ENCODE measurements at regions of chr20 and their contacts with region 1.

Region 1: GRCh38 chr20:956330-956951 is 40.3 kb upstream of the ANGPT4 start:
- DNase-seq: peak; percentile 53 to 93
- H3K4me3 ChIP-seq: no peak overlapping the region
- H3K27ac ChIP-seq: no peak overlapping the region
- H3K4me1 ChIP-seq: peaks cover 0 to 3% (median under 1%) of the 10 kb centered on the region in 4 experiments; a peak in 3 of 7 replicates
- H3K27me3 ChIP-seq: peaks cover 0 to 3% (median 0%) of the 10 kb centered on the region in 4 experiments; a peak in 1 of 7 replicates
- CTCF ChIP-seq: peak; percentile 95 to 99 (median 98)
- EP300 ChIP-seq: no peak
- POLR2A ChIP-seq: no peak
- RAD21 ChIP-seq: peak; percentile 100

Region 2: DNA sequence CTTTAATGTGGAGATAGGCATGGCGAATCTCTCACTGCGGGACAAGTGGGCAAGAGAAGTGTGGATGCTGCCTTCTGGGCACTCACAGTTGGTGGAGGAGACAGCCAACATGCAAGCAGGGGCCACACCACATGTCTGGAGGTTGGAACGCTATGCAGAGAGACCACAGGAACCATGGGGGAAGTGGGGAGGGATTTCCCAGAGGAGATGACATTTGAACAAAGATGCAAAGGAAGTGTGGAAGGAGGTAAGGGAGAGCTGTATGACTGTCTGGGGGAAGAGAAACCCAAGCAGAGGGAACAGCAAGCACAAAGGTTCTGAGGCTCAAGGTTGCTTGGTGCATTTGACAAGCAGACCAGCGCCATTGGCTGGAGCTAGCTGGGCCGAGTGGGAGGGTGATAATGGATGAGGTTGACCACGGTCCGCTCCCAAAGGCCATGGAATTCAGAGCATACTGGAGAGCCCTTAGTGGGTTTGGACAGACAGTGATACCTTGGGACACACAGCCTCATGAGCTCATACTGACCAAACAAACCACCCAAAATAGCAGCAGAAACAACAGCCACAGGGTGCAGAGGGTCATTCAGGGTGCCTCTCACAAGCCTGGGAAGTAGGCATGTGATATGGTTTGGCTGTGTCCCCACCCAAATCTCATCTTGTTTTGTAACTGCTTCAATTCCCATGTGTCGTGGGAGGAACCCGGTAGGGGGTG is 130.6 kb before region 1 on chr20:
- CTCF ChIA-PET with region 1: interaction called, 153 read pairs
- POLR2A ChIA-PET with region 1: no interaction called
- DNase-seq: no peak
- H3K4me3 ChIP-seq: no peak overlapping the region
- H3K27ac ChIP-seq: no peak overlapping the region
- H3K4me1 ChIP-seq: peaks cover 0 to 6% (median 0%) of the 10 kb centered on the region in 4 experiments; a peak in 1 of 7 replicates
- H3K27me3 ChIP-seq: no peaks in the 10 kb centered on the region
- CTCF ChIP-seq: no peak
- EP300 ChIP-seq: no peak
- POLR2A ChIP-seq: no peak
- RAD21 ChIP-seq: no peak

Region 3: GRCh38 chr20:884983-885952 is 71.2 kb before region 1 on chr20:
- CTCF ChIA-PET with region 1: interaction called, 191 read pairs
- POLR2A ChIA-PET with region 1: interaction called, 3 read pairs
- DNase-seq: peak; percentile 82 to 91
- H3K4me3 ChIP-seq: peak overlapping the region in 1 of 4 experiments; percentile 32; a peak in 1 of 8 replicates
- H3K27ac ChIP-seq: no peak overlapping the region
- H3K4me1 ChIP-seq: peaks cover 0 to 6% (median 0%) of the 10 kb centered on the region in 4 experiments; a peak in 3 of 7 replicates
- H3K27me3 ChIP-seq: peaks cover 0 to 5% (median 3%) of the 10 kb centered on the region in 4 experiments; a peak in 6 of 7 replicates
- CTCF ChIP-seq: peak; percentile 74 to 98 (median 78)
- EP300 ChIP-seq: no peak
- POLR2A ChIP-seq: no peak
- RAD21 ChIP-seq: peak; percentile 90 to 93

Region 4: GRCh38 chr20:916825-917224 is 39.6 kb before region 1 on chr20:
- CTCF ChIA-PET with region 1: interaction called, 79 read pairs
- POLR2A ChIA-PET with region 1: interaction called, 3 read pairs
- DNase-seq: no peak
- H3K4me3 ChIP-seq: no peak overlapping the region
- H3K27ac ChIP-seq: no peak overlapping the region
- H3K4me1 ChIP-seq: peaks cover 0 to 16% (median 5%) of the 10 kb centered on the region in 4 experiments; a peak in 4 of 7 replicates
- H3K27me3 ChIP-seq: peaks cover 0 to 3% (median 0%) of the 10 kb centered on the region in 4 experiments; a peak in 1 of 7 replicates
- CTCF ChIP-seq: no peak
- EP300 ChIP-seq: no peak
- POLR2A ChIP-seq: no peak
- RAD21 ChIP-seq: no peak

Region 5: DNA sequence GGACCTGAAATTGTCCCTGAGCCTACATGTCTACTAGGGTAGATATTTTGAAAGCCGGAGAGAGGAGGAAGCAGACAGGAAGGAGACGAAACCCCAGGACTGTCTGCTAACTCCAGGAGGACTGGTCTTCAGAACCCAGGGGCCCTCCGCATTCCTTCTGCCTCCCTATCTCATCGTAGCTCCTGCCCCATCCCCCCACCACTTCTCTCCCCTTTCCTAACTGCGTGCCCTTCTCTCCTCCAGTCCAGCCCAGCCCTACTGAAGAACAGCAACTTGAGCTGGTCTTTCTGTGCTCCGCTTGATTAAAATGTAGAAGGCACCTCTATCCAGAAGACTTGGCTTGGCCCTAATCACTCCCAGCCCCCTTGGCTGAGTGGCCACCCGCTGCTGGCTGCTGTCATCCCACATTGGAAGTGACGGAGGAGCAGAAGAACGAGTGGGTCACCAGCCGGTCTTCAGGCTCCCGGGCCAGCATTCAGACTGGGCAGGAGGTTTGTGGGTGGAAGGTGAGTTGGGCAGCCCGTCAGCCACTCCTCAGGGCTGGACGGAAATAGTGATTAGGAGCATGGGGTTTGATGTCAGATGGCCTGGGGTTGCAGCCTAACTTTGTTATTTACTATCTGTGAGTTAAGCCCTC is 11.5 kb before region 1 on chr20:
- CTCF ChIA-PET with region 1: interaction called, 83 read pairs
- POLR2A ChIA-PET with region 1: interaction called, 3 read pairs
- DNase-seq: no peak
- H3K4me3 ChIP-seq: peak overlapping the region in 2 of 4 experiments; percentile 14 to 43; a peak in 2 of 8 replicates
- H3K27ac ChIP-seq: no peak overlapping the region
- H3K4me1 ChIP-seq: peaks cover 0 to 14% (median 8%) of the 10 kb centered on the region in 4 experiments; a peak in 5 of 7 replicates
- H3K27me3 ChIP-seq: no peaks in the 10 kb centered on the region
- CTCF ChIP-seq: no peak
- EP300 ChIP-seq: no peak
- POLR2A ChIP-seq: no peak
- RAD21 ChIP-seq: no peak

Region 6: DNA sequence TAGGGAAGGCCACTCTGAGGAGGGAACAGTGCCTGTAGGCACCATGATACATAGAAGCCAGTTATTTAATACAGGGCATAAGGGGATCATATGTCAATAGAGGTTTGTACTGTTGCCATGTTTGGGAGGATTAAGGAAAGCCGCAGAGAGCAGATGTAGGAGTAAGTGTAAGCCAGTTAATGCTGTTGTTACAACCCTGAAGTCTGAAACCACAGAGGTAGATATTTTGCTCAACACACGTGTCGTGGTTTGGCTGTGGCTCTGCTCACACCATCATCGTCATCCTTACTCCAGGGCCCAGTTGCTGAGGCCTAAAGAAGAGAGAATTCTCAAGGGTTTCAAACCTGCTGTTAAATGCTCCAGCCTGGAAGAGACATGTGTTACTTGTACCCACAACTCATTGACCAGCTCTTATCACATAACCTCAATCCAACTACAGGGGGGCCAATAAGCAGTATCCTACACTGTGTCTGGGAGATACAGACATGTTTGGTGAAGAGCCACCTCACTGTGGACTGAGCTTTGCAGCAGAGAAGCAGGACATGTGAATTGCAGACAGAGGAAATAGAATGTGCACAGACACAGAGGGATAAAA is 131.0 kb after region 1 on chr20:
- CTCF ChIA-PET with region 1: no interaction called
- POLR2A ChIA-PET with region 1: no interaction called
- DNase-seq: no peak
- H3K4me3 ChIP-seq: no peak overlapping the region
- H3K27ac ChIP-seq: no peak overlapping the region
- H3K4me1 ChIP-seq: no peaks in the 10 kb centered on the region
- H3K27me3 ChIP-seq: no peaks in the 10 kb centered on the region
- CTCF ChIP-seq: no peak
- EP300 ChIP-seq: no peak
- POLR2A ChIP-seq: no peak
- RAD21 ChIP-seq: no peak

Region 7: GRCh38 chr20:1108437-1108920 is 152.0 kb after region 1 on chr20:
- CTCF ChIA-PET with region 1: interaction called, 43 read pairs
- POLR2A ChIA-PET with region 1: no interaction called
- DNase-seq: peak in 1 of 2 experiments; percentile 82
- H3K4me3 ChIP-seq: no peak overlapping the region
- H3K27ac ChIP-seq: no peak overlapping the region
- H3K4me1 ChIP-seq: no peaks in the 10 kb centered on the region
- H3K27me3 ChIP-seq: 0 out of 7 replicates have a peak, but pooled peaks cover 0 to 2% (median 0%) of the 10 kb centered on the region in 4 experiments
- CTCF ChIP-seq: peak; percentile 72 to 87 (median 81)
- EP300 ChIP-seq: no peak
- POLR2A ChIP-seq: no peak
- RAD21 ChIP-seq: peak; percentile 84

Region 8: DNA sequence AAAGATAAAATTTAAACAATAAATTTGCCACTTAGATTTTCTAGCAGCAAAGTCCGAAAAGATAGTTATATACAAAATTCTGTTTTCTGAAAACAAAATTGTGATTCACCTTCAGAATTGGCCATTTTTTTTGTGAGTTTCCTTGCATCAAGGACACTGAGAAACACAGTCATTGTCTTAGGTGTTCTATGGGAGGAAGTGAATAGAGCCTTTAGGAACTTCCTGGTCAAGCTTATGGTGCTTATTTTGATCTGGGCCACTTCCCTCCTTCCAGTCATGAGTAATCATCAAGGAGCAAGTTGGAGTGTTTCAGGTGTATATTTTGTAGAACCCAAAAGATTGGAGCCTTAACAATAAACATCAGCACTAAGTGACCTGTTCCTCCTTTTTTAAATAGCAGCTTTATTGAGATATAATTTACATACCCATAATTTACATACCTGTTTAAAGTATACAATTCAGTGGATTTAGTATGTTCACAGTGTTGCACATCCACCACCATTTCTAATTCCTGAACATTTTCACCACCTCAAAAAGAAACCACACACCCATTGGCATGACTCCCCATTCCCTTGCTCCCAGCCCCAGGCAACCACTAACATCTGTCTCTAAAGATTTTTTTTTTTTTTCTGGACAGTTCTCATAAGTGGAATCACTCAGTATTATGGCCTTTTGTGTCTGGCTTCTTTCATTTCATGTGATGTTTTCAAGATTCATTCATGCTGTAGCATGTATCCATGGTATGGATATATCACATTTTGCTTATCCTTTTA is 210.7 kb after region 1 on chr20:
- CTCF ChIA-PET with region 1: no interaction called
- POLR2A ChIA-PET with region 1: no interaction called
- DNase-seq: no peak
- H3K4me3 ChIP-seq: no peak overlapping the region
- H3K27ac ChIP-seq: no peak overlapping the region
- H3K4me1 ChIP-seq: no peaks in the 10 kb centered on the region
- H3K27me3 ChIP-seq: no peaks in the 10 kb centered on the region
- CTCF ChIP-seq: no peak
- EP300 ChIP-seq: no peak
- POLR2A ChIP-seq: no peak
- RAD21 ChIP-seq: no peak

Region 9: GRCh38 chr20:1576641-1577040 is 620.2 kb after region 1 on chr20:
- CTCF ChIA-PET with region 1: no interaction called
- POLR2A ChIA-PET with region 1: no interaction called
- DNase-seq: no peak
- H3K4me3 ChIP-seq: no peak overlapping the region
- H3K27ac ChIP-seq: no peak overlapping the region
- H3K4me1 ChIP-seq: no peaks in the 10 kb centered on the region
- H3K27me3 ChIP-seq: no peaks in the 10 kb centered on the region
- CTCF ChIP-seq: no peak
- EP300 ChIP-seq: no peak
- POLR2A ChIP-seq: no peak
- RAD21 ChIP-seq: no peak

Measured in H1 (cell line).